ENCODE measurements at regions of chr20 and their contacts with region 1.

Region 1: GRCh38 chr20:2873010-2873746 is at the start of gene PTPRA:
- DNase-seq: peak; percentile 95
- H3K4me3 Mint-ChIP-seq: peak within 1 kb of the TSS; percentile 89
- H3K27ac Mint-ChIP-seq: peak within 1 kb of the TSS; percentile 88
- H3K4me1 Mint-ChIP-seq: peaks cover 46% of the 10 kb centered on the region
- H3K27me3 Mint-ChIP-seq: no peaks in the 10 kb centered on the region
- total RNA-seq, gene PTPRA: 31.7 to 32.7 TPM

Region 2: GRCh38 chr20:2888224-2888955 is 15.2 kb after region 1 on chr20:
- CTCF ChIA-PET with region 1: interaction called, 5 read pairs
- intact Hi-C with region 1: loop called (anchors 2 kb)
- DNase-seq: no peak
- H3K4me3 Mint-ChIP-seq: no peak overlapping the region
- H3K27ac Mint-ChIP-seq: no peak overlapping the region
- H3K4me1 Mint-ChIP-seq: peaks cover 58% of the 10 kb centered on the region
- H3K27me3 Mint-ChIP-seq: no peaks in the 10 kb centered on the region

Region 3: DNA sequence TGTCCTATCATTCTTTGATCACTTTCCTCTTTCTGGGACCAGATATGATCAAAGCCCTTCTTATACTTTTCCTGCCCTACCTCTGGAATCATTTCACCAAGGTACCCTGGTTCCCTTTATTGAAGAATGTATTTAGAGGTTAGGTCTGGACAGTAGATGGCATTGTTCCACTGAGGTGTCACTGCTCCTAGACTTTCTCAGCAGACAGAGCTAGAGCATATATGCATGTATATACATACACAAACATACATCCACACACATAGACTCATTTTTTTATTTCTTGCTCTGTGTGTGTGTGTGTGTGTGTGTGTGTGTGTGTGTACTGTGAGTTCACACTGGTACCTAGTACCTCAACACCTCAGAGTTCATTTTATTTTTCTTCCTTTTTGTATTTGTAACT is 41.0 kb after region 1 on chr20:
- CTCF ChIA-PET with region 1: interaction called, 3 read pairs
- intact Hi-C with region 1: loop called (anchors 1 kb)
- DNase-seq: no peak
- H3K4me3 Mint-ChIP-seq: no peak overlapping the region
- H3K27ac Mint-ChIP-seq: no peak overlapping the region
- H3K4me1 Mint-ChIP-seq: peaks cover 18% of the 10 kb centered on the region
- H3K27me3 Mint-ChIP-seq: no peaks in the 10 kb centered on the region

Region 4: DNA sequence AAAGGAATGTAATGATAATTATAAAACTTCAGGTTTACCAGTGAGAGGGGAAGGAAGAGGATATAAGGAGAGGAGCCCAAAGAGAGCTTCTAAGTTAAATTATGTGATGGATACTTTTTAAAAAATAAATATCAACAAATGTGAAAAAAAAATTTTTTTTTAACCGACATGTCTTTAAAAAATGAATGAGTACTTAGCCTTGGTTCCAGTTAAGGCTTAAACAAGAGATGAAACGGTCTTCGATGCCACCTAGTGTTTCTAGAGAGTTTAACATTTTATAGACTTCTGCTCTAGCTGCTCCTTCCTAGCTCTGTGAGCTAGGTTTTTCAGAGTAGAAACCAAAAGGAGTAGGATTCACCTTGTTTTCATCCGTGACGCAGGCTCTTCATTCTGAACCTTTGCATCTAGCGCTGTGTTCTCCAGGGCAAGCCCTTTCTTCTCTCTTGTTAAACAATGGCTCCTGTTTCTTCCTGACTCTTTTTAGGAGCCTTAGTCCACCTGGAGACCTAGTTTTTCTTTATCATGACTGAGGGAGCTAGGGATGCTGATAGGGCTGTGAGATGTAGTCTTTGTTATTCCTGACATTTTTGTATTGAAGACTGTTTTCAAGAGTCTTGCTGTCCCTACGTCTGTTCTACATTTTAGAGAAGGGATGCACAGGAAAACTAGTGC is 127.8 kb after region 1 on chr20:
- CTCF ChIA-PET with region 1: interaction called, 6 read pairs
- intact Hi-C with region 1: loop called (anchors 1 kb)
- DNase-seq: peak; percentile 18
- H3K4me3 Mint-ChIP-seq: no peak overlapping the region
- H3K27ac Mint-ChIP-seq: no peak overlapping the region
- H3K4me1 Mint-ChIP-seq: no peaks in the 10 kb centered on the region
- H3K27me3 Mint-ChIP-seq: no peaks in the 10 kb centered on the region

Region 5: GRCh38 chr20:3156811-3157619 is 283.8 kb after region 1 on chr20:
- CTCF ChIA-PET with region 1: no interaction called
- intact Hi-C with region 1: loop called (anchors 5 kb)
- DNase-seq: peak; percentile 42
- H3K4me3 Mint-ChIP-seq: peak overlapping the region; percentile 66
- H3K27ac Mint-ChIP-seq: peak overlapping the region; percentile 91
- H3K4me1 Mint-ChIP-seq: peaks cover 53% of the 10 kb centered on the region
- H3K27me3 Mint-ChIP-seq: no peaks in the 10 kb centered on the region

Region 6: GRCh38 chr20:3811467-3812258 is 938.5 kb after region 1 on chr20:
- CTCF ChIA-PET with region 1: no interaction called
- intact Hi-C with region 1: loop called (anchors 2 kb)
- DNase-seq: peak; percentile 97
- H3K4me3 Mint-ChIP-seq: peak overlapping the region; percentile 86
- H3K27ac Mint-ChIP-seq: peak overlapping the region; percentile 97
- H3K4me1 Mint-ChIP-seq: peaks cover 70% of the 10 kb centered on the region
- H3K27me3 Mint-ChIP-seq: no peaks in the 10 kb centered on the region